Activated CD4-positive, alpha-beta T cell treated with anti-CD3 and anti-CD28 coated beads, Interleukin-2, amount 10 ng/mL, durations not matched to agents 24 days and 14 days (primary cell): ENCODE measurements at regions of chr3 and their contacts with region 1.

Region 1: GRCh38 chr3:38004415-38005076 is 14.0 kb downstream of the VILL start:
- DNase-seq: peak; percentile 87
- H3K4me3 Mint-ChIP-seq: no peak overlapping the region
- H3K27ac Mint-ChIP-seq: no peak overlapping the region
- H3K4me1 Mint-ChIP-seq: peaks cover 15% of the 10 kb centered on the region
- H3K27me3 Mint-ChIP-seq: no peaks in the 10 kb centered on the region

Region 2: DNA sequence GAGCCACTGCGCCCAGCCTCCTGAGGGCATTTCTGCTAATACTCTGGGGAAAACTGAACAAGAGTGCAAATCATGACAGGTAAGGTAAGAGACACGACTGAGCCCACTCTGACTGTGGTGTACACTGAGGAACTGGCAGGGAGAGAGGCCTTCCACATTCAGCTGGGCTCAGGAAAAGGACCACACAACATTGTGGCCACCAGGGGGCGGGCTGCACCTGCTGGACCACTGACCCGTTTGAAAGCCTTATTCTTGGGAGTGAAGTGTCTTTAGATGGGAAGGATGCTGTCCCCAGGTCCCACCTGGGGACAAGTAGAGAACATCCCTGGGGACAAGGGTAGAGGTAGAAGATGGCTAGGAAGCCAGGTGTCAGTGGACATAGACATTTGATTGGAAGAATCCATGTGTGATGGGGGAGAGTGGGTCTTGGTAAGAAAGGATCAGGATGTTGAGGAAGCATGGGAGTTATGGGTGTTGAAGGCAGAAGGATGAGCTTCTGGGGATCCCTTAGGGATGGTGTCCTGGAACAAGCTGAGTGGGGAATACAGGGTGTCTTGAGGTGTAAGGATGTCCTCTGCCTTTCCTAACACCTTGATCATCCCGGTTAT is 149.1 kb before region 1 on chr3:
- intact Hi-C with region 1: loop called (anchors 1 kb)
- DNase-seq: peak; percentile 93
- H3K4me3 Mint-ChIP-seq: no peak overlapping the region
- H3K27ac Mint-ChIP-seq: no peak overlapping the region
- H3K4me1 Mint-ChIP-seq: peaks cover 5% of the 10 kb centered on the region
- H3K27me3 Mint-ChIP-seq: no peaks in the 10 kb centered on the region

Region 3: GRCh38 chr3:37974121-37975083 is 30.1 kb before region 1 on chr3:
- intact Hi-C with region 1: loop called (anchors 1 kb)
- DNase-seq: peak; percentile 91
- H3K4me3 Mint-ChIP-seq: no peak overlapping the region
- H3K27ac Mint-ChIP-seq: no peak overlapping the region
- H3K4me1 Mint-ChIP-seq: peaks cover 4% of the 10 kb centered on the region
- H3K27me3 Mint-ChIP-seq: no peaks in the 10 kb centered on the region

Region 4: DNA sequence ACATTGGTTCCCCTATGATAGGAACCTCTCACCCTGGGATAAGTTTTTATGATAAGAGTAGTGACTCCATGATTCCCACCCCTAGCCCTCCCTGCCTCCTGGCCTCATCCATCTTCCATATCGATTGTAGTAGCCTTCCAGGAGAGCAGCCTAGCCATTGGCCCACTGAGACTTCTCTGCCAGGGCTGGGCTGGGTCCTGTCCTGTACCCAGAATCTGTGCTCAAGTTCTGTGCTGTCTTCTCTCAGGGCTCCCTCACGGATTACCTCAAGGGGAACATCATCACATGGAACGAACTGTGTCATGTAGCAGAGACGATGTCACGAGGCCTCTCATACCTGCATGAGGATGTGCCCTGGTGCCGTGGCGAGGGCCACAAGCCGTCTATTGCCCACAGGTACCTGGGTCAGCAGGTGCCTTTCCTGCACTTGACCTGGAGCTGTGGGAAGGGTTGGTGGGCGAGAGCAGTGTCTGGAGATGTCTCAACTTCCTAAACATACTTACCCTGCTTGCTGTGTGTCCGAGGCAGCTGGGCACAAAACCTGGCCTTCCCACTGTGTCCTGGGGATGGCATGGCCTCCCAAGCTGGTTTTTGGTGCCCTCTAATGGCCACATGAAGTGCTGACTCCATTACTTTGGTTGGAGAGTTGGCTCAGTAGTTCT is 475.0 kb after region 1 on chr3:
- intact Hi-C with region 1: loop called (anchors 1 kb)
- DNase-seq: peak; percentile 85
- H3K4me3 Mint-ChIP-seq: no peak overlapping the region
- H3K27ac Mint-ChIP-seq: no peak overlapping the region
- H3K4me1 Mint-ChIP-seq: no peaks in the 10 kb centered on the region
- H3K27me3 Mint-ChIP-seq: no peaks in the 10 kb centered on the region